Activated CD8-positive, alpha-beta T cell treated with anti-CD3 and anti-CD28 coated beads for 36 hours (primary cell): ENCODE measurements at regions of chrX and their contacts with region 1.

Region 1: GRCh38 chrX:13734278-13735172 is at the starts of genes OFD1 and TRAPPC2:
- DNase-seq: peak; percentile 93
- ATAC-seq: peak; percentile 95
- H3K4me3 Mint-ChIP-seq: peak within 1 kb of the TSS; percentile 88
- H3K27ac Mint-ChIP-seq: peak within 1 kb of the TSS; percentile 94
- H3K4me1 Mint-ChIP-seq: peaks cover 39% of the 10 kb centered on the region
- H3K27me3 Mint-ChIP-seq: no peaks in the 10 kb centered on the region
- CTCF ChIP-seq: no peak
- total RNA-seq, gene OFD1: 32.4 to 34.5 TPM
- total RNA-seq, gene TRAPPC2: 16.0 to 19.2 TPM

Region 2: DNA sequence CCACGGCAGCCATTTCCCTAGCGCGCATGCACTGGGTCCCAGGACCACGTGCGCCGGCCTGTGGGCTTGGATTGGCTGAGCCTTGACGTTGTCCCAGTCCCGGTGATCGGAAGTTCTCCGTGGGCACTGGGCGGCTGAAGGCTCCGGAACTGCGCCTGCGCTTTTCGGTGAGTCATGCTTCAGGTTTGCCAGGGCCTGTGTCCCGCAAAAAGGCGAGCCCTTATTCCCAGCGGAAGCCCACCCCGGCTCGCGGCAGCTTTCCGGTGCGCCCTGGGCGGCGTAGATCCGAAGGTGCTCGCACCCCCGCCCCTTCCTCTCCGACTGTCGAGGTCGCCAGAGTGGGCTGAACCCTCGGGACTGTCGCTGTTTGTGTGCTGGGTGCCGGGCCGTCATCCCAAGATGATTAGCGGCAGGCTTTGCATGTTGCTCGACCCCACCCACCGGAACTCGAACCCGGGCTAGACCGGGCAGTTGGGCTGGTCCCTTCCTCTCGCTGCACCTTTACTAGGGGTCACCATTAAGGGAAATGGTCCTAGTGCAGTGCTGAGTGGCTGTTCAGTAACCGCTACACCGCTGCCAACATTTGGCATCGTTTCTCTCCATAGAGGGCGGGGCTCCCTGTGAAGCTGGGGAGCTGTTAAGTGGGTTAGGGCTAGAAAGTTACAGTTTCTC is 81.4 kb before region 1 on chrX and contains the start of gene TCEANC:
- CTCF ChIA-PET with region 1: interaction called, 4 read pairs
- POLR2A ChIA-PET with region 1: interaction called, 4 read pairs
- intact Hi-C with region 1: loop called (anchors 10 kb)
- DNase-seq: peak; percentile 96
- ATAC-seq: peak; percentile 95
- H3K4me3 Mint-ChIP-seq: peak within 1 kb of the TSS; percentile 80
- H3K27ac Mint-ChIP-seq: peak within 1 kb of the TSS; percentile 90
- H3K4me1 Mint-ChIP-seq: peaks cover 23% of the 10 kb centered on the region
- H3K27me3 Mint-ChIP-seq: no peaks in the 10 kb centered on the region
- CTCF ChIP-seq: no peak
- total RNA-seq, gene TCEANC: 1.3 to 1.4 TPM

Region 3: DNA sequence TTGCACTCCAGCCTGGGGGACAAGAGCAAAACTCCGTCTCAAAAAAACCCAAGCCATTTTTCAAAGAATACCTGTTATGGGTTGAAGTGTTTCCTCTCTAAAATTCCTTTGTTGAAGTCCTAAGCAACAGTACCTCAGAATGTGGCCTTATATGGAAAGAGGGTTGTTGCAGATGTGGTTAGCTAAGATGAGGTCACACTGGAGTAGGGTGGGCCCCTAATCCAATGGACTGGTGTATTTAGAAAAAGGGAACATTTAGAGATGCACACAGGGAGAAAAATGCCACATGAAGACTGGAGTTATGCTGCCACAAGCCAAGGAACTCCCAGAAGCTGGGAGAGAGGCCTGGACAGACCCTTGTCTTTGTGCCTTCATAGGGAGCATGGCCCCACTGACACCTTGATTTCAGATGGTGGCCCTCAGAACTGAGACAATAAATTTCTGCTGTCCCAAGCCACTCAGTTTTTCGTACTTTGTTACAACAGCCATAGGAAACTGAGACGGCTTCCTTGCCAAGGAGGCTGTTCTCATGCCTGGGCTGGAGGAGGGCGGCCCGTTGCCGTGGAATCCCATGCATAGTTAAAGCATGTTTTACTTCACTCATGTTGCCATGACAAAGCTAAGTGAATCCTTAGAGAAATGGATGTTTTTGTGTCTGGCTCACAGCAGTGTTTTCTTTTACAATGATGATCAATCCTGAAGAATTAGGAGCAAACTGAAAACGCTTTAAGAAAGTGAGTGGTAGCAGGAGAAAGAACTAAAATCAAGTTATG is 16.6 kb before region 1 on chrX:
- CTCF ChIA-PET with region 1: no interaction called
- POLR2A ChIA-PET with region 1: no interaction called
- intact Hi-C with region 1: no loop called
- DNase-seq: no peak
- ATAC-seq: peak; percentile 39
- H3K4me3 Mint-ChIP-seq: no peak overlapping the region
- H3K27ac Mint-ChIP-seq: peak overlapping the region; percentile 72
- H3K4me1 Mint-ChIP-seq: peaks cover 33% of the 10 kb centered on the region
- H3K27me3 Mint-ChIP-seq: no peaks in the 10 kb centered on the region
- CTCF ChIP-seq: no peak